Activated CD4-positive, alpha-beta T cell treated with anti-CD3 and anti-CD28 coated beads, Interleukin-2, amount 10 ng/mL, durations not matched to agents 7 days and 5 days (primary cell): ENCODE measurements at regions of chr19 and their contacts with region 1.

Region 1: GRCh38 chr19:53076977-53077376 is 26.2 kb downstream of the ZNF160 start:
- DNase-seq: peak; percentile 14
- H3K4me3 Mint-ChIP-seq: no peak overlapping the region
- H3K27ac Mint-ChIP-seq: no peak overlapping the region
- H3K4me1 Mint-ChIP-seq: no peaks in the 10 kb centered on the region
- H3K27me3 Mint-ChIP-seq: no peaks in the 10 kb centered on the region

Region 2: GRCh38 chr19:52761696-52762095 is 315.3 kb before region 1 on chr19:
- CTCF ChIA-PET with region 1: no interaction called
- POLR2A ChIA-PET with region 1: interaction called, 11 read pairs
- DNase-seq: no peak
- H3K4me3 Mint-ChIP-seq: no peak overlapping the region
- H3K27ac Mint-ChIP-seq: no peak overlapping the region
- H3K4me1 Mint-ChIP-seq: no peaks in the 10 kb centered on the region
- H3K27me3 Mint-ChIP-seq: no peaks in the 10 kb centered on the region

Region 3: DNA sequence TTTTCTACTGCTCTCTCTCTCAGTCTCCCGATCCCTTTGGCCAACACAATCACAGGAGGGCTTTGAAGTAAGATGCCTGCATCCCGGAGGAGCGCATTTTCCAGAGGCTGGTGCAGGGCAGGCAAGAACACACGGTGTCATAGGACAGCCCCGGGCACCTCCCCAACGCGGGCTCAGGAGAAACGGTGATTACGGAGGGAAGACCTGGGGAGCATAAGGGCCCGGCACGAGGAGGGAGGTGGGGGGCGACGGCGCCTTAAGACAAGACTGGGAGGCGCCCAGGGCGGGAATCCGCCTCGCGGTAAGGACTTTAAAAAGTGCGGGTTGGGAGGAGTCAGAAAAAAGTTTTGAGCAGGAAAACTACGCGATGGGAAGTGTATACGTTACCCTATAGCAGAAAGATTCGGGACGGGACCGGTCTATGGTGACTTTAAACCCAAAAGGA is 135.0 kb before region 1 on chr19:
- CTCF ChIA-PET with region 1: no interaction called
- POLR2A ChIA-PET with region 1: interaction called, 10 read pairs
- DNase-seq: peak; percentile 23
- H3K4me3 Mint-ChIP-seq: peak overlapping the region; percentile 92
- H3K27ac Mint-ChIP-seq: peak overlapping the region; percentile 91
- H3K4me1 Mint-ChIP-seq: peaks cover 28% of the 10 kb centered on the region
- H3K27me3 Mint-ChIP-seq: no peaks in the 10 kb centered on the region